Activated CD4-positive, alpha-beta T cell treated with anti-CD3 and anti-CD28 coated beads for 36 hours (primary cell): ENCODE measurements at regions of chr21 and their contacts with region 1.

Region 1: DNA sequence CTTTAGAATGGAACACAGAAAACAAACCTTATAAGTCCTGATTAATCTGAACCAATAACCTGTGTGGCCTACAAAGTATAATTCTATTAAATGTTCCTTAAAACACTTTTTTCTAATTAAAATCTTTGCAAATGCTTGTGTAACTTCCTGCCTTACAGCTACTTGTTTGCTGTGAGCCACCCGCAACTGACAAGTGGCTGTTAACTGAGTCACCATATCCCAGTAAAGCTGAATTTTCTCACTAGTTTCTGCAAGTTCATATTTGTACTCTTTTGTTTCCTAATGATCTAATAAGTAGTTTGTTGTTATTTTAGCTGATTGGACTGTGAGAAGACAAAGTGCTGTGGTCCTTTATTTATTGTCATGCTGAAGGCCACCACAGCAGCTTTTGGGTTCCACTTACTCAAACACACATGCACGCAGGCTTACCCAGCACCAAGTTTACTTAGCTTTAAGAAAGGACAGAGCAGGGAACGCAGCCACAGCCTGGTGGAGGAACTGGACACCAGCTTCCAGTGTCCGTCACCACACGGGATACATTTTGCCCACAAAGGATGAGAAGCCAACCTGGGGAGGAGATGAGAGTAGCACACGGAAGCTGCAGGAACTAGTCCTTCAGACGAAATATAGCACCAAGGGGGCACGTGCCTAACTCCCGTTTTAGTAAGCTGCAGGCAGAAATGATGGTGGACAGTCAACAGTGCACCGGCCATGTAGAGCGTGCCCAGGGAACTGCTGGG is 47.8 kb downstream of the LCA5L start:
- DNase-seq: no peak
- ATAC-seq: no peak
- H3K4me3 Mint-ChIP-seq: no peak overlapping the region
- H3K27ac Mint-ChIP-seq: no peak overlapping the region
- H3K4me1 Mint-ChIP-seq: no peaks in the 10 kb centered on the region
- H3K27me3 Mint-ChIP-seq: no peaks in the 10 kb centered on the region

Region 2: DNA sequence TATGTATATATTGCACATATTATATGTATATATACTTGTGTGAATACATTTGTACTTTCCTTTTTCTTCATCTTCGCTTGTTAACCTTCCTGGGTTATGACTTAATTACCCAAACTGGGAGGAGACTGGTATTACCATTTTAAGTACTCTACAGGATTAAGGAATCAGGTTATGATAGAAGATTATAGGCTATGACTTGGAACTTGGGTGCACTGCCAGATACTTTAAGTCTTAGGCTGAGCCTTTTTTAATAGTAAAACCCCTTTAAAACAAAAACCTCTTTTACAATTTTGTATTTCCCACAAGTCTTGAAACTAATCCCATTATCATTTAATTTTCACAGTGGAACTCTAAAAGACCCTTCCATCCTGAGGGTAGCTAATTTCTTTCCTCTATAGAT is 90.3 kb before region 1 on chr21:
- CTCF ChIA-PET with region 1: no interaction called
- POLR2A ChIA-PET with region 1: interaction called, 11 read pairs
- intact Hi-C with region 1: no loop called
- DNase-seq: no peak
- ATAC-seq: no peak
- H3K4me3 Mint-ChIP-seq: no peak overlapping the region
- H3K27ac Mint-ChIP-seq: no peak overlapping the region
- H3K4me1 Mint-ChIP-seq: peaks cover 35% of the 10 kb centered on the region
- H3K27me3 Mint-ChIP-seq: no peaks in the 10 kb centered on the region

Region 3: GRCh38 chr21:39353295-39353694 is 44.5 kb before region 1 on chr21:
- CTCF ChIA-PET with region 1: no interaction called
- POLR2A ChIA-PET with region 1: no interaction called
- intact Hi-C with region 1: no loop called
- DNase-seq: no peak
- ATAC-seq: no peak
- H3K4me3 Mint-ChIP-seq: no peak overlapping the region
- H3K27ac Mint-ChIP-seq: no peak overlapping the region
- H3K4me1 Mint-ChIP-seq: peaks cover 5% of the 10 kb centered on the region
- H3K27me3 Mint-ChIP-seq: peaks cover 2% of the 10 kb centered on the region

Region 4: GRCh38 chr21:39373644-39374043 is 24.2 kb before region 1 on chr21:
- CTCF ChIA-PET with region 1: no interaction called
- POLR2A ChIA-PET with region 1: no interaction called
- intact Hi-C with region 1: no loop called
- DNase-seq: no peak
- ATAC-seq: peak; percentile 42
- H3K4me3 Mint-ChIP-seq: no peak overlapping the region
- H3K27ac Mint-ChIP-seq: no peak overlapping the region
- H3K4me1 Mint-ChIP-seq: no peaks in the 10 kb centered on the region
- H3K27me3 Mint-ChIP-seq: no peaks in the 10 kb centered on the region